BJ (cell line): ENCODE measurements at regions of chr1 and their contacts with region 1.

Region 1: DNA sequence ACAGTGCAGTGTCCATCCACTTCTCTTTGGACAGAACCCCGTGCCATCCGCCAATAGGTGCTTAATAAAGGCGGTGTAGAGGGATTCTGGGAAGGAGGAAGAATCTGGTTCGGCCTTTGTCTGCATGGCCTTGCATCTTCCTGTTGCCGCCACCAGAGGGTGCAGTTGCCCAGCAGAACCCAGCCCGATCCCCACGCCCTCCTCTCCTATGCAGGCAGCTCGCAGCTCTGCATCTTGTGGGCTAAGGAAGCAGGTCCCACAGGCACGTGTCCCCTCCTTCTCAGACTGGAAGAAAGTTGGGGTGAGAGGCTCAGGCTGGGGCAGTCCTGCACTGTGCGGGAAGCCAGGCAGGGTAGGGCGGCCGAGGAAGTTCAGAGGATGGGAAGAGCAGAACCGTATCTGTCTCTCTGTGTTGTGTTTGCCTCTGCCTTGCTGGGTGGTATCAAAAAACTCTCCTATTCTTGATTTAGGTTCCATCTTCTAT is 20.8 kb downstream of the NAV1 start:
- DNase-seq: no peak
- H3K4me3 ChIP-seq: no peak overlapping the region
- H3K27me3 ChIP-seq: no peaks in the 10 kb centered on the region
- CTCF ChIP-seq: peak; percentile 91

Region 2: DNA sequence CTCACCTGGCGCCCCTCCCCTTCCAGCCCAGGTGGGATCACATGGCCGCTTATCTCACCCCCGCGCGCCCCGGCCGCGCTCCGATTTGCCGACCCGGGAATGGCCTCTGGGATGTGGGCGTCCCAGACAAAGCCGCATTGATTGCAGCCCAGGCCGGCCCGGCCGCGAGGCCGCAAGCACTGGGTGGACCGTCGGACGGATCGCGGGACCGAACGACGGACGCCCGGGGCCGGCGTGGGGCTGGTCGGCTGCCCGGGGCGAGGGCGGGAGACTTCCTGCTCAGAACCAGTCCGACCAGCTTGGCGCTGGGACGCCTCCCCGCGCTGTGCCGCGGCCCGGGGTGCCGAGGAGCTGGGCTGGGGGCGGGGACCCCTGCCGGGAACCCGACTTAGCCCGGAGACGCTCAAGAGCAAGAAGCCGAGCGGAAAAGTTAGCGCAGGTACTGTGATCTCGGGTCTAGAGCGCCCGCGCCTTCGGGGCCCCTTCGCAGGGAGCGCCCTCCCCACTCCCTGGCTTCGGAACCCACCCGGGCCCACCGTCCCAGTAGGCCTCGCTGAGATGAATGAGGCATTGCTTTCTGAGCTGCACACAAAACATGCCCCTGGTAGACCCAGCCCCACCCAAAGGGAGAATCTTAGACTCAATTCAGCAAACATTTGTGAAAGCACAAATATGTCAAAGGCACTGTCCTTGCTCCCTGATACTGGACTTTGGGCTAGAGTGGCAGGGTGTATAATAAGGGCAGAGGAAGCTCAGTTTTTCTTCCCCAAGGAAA is 160.2 kb before region 1 on chr1:
- CTCF ChIA-PET with region 1: no interaction called
- POLR2A ChIA-PET with region 1: no interaction called
- DNase-seq: no peak
- H3K4me3 ChIP-seq: no peak overlapping the region
- H3K27me3 ChIP-seq: peaks cover 53% of the 10 kb centered on the region
- CTCF ChIP-seq: no peak

Region 3: GRCh38 chr1:201530741-201531531 is 28.8 kb before region 1 on chr1:
- CTCF ChIA-PET with region 1: interaction called, 97 read pairs
- POLR2A ChIA-PET with region 1: no interaction called
- DNase-seq: peak; percentile 81
- H3K4me3 ChIP-seq: no peak overlapping the region
- H3K27me3 ChIP-seq: no peaks in the 10 kb centered on the region
- CTCF ChIP-seq: peak; percentile 89

Region 4: DNA sequence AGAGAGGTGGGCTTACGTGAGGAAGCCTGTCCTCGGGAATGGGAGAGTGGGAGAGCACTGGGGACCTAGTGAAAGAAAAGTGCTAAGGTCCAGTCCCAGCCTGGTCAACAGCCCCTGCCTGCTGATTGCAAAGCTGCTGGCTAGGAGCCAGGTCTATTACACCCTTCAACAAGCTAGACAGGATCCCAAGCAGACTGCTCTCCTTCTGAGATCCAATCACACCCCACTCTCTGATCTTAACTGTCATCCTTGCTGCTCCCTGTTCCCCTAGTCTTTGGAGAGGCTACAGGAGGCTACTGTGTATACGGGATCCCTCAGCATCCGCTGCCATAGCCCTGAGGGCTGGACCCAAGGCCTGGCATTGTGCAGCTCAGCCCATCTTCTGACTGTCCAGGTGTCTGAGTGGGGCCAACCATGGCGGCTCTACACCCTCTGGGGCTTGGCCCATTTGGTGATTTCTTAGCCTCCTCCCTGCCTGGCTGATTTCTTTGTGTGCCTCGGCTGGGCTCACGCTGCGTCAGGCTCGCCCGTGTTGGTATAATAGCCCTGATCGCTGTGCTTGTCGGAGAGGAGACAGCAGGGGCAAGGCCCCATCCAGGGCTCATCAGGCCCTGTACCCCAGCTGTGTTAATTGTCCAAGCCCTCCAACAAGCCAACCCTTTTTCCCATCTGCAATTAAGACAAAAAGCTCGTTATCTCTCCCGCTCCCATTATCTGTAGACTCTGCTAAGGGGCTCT is 23.2 kb after region 1 on chr1:
- CTCF ChIA-PET with region 1: interaction called, 13 read pairs
- POLR2A ChIA-PET with region 1: no interaction called
- DNase-seq: no peak
- H3K4me3 ChIP-seq: no peak overlapping the region
- H3K27me3 ChIP-seq: no peaks in the 10 kb centered on the region
- CTCF ChIP-seq: no peak

Region 5: GRCh38 chr1:201625226-201625761 is 65.6 kb after region 1 on chr1:
- CTCF ChIA-PET with region 1: interaction called, 17 read pairs
- POLR2A ChIA-PET with region 1: no interaction called
- DNase-seq: peak; percentile 97
- H3K4me3 ChIP-seq: no peak overlapping the region
- H3K27me3 ChIP-seq: no peaks in the 10 kb centered on the region
- CTCF ChIP-seq: peak; percentile 57

Region 6: DNA sequence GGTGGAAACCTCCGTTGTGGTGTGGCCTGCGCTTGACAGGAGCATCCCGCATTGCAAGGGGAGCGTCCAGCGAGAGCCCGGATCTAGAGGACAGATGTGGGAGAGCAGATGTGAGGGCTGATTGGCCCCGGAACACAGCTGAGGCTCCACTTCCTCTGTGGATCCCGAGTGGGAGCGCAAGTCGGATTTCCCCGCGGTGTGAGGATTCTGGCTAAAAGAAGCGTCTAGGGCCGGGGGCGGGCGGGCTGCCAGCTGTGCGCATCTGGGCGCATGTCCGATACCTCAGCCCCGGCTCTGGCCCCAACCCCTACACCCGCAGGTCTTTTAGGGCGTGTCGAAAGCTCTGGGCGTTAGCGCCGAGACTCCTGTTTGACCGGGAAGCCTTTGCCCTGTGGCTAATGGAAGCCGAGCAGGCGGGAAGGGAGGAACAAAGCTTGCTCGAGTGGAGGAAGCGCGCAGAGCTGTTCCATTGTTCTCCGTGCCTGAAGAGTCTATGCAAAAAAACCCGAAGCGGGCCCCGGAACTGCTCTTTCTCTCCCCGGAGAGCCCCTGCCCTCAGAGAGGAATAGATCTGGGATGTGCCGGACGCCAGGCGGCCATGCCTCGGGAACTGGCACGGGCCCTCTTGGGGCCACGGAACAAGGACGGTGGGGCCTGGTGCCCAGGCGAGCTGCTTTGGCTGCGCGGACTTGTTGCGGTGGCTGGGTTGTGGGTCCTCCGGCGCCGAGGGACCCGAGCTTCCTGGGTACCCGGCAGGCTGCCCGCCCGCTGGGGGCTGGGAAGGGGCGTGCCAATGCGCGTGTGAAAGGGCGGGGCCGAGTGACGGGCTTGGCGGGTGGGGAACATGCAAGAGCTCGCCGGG is 90.3 kb after region 1 on chr1:
- CTCF ChIA-PET with region 1: interaction called, 38 read pairs
- POLR2A ChIA-PET with region 1: interaction called, 3 read pairs
- DNase-seq: no peak
- H3K4me3 ChIP-seq: peak overlapping the region; percentile 73
- H3K27me3 ChIP-seq: no peaks in the 10 kb centered on the region
- CTCF ChIP-seq: peak; percentile 27; the same call in 1 of the 2 replicates

Region 7: GRCh38 chr1:201655243-201655642 is 95.5 kb after region 1 on chr1:
- CTCF ChIA-PET with region 1: interaction called, 38 read pairs
- POLR2A ChIA-PET with region 1: interaction called, 3 read pairs
- DNase-seq: peak; percentile 82
- H3K4me3 ChIP-seq: no peak overlapping the region
- H3K27me3 ChIP-seq: no peaks in the 10 kb centered on the region
- CTCF ChIP-seq: peak; percentile 68

Region 8: GRCh38 chr1:201678264-201679101 is 118.8 kb after region 1 on chr1:
- CTCF ChIA-PET with region 1: no interaction called
- POLR2A ChIA-PET with region 1: no interaction called
- DNase-seq: no peak
- H3K4me3 ChIP-seq: no peak overlapping the region
- H3K27me3 ChIP-seq: no peaks in the 10 kb centered on the region
- CTCF ChIP-seq: no peak

Region 9: GRCh38 chr1:201696217-201696761 is 136.6 kb after region 1 on chr1:
- CTCF ChIA-PET with region 1: interaction called, 269 read pairs
- POLR2A ChIA-PET with region 1: no interaction called
- DNase-seq: peak; percentile 85
- H3K4me3 ChIP-seq: no peak overlapping the region
- H3K27me3 ChIP-seq: no peaks in the 10 kb centered on the region
- CTCF ChIP-seq: 0 out of 2 replicates have a peak, but pooled peaks have one; percentile 10